Breast epithelium (tissue), 4 donors: ENCODE measurements at regions of chr1 and their contacts with region 1.

Region 1: DNA sequence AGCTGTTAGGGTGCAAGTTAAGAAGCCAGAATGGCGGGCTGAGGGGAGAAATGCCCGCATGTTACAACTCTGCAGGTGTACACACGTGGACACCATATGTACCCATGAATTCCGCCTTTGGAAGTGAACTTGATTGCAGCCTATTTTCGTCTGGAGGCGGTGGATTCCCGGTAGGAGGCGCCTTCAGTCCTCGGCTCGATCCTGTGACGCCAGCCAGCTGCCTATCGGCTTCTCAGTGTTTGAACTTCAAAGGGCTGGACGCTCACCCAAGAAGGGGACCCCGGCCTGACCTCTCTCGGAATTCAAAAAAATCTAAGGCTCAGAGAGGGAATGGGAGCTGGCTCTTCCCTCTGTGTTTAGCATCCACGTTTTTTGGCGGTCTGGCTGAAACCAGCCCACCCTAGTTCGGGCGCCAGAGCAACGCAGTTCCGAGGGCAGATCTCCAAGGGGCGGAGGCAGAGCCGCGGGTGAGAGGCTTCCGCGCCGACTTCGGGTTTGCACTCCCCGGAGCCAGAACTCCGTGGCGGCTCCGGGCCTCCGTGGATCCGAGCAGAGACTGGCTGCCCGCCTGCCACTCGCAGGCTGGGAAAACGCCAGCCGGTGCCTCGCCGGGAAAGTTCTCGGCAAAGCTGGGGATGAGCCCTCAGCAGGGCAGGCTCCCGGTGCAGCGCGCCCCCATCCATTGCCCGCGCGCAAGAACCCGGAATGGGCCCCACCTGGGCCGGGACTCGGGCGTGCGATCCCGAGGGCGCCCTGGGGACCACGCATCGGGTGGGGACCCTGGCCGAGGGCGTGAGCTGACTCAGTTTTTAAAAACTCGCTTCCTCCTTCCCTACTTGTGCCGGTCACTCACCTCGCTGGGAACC is 996 bp upstream of the TMEM51 start:
- DNase-seq: peak; percentile 84 to 86
- H3K4me3 ChIP-seq: peak overlapping the region; percentile 57 to 96 (median 85)
- H3K27ac ChIP-seq: peak overlapping the region; percentile 91 to 93
- H3K4me1 ChIP-seq: no peaks in the 10 kb centered on the region
- H3K27me3 ChIP-seq: no peaks in the 10 kb centered on the region
- CTCF ChIP-seq: peak in 2 of 3 donors; percentile 45 to 65
- POLR2A ChIP-seq: peak; percentile 22

Region 2: DNA sequence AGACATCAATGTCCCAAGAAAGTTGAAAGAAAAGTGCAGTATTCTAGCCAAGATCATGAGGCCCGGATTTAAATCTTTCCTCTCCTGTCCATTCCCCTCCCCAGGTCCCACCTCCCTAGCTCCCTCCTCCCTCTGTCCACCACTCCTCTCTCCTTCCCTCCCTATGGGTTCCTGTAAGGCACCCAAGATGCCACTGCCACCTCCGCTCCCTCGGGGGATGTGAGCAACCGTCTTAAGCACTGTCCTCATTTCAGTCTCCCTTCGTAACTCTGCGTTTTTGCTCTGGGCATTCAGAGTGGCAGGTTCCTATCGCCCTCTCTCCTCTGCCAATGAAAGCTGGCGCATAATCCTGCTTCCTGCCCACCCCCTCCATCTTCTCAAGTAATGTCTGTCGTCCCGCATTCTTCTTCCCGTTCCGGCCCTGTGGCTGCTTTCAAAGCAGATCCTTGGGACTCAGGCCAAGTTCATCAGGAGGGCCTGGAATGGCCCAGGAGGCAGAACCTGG is 252.9 kb before region 1 on chr1:
- intact Hi-C with region 1: no loop called
- DNase-seq: peak in 1 of 2 donors; percentile 72
- H3K4me3 ChIP-seq: no peak overlapping the region
- H3K27ac ChIP-seq: peak overlapping the region; percentile 52 to 60
- H3K4me1 ChIP-seq: peaks cover 0 to 6% of the 10 kb centered on the region in 2 donors
- H3K27me3 ChIP-seq: no peaks in the 10 kb centered on the region
- CTCF ChIP-seq: no peak
- POLR2A ChIP-seq: no peak

Region 3: GRCh38 chr1:15099441-15100120 is 53.0 kb before region 1 on chr1:
- intact Hi-C with region 1: loop called (anchors 2 kb)
- DNase-seq: no peak
- H3K4me3 ChIP-seq: no peak overlapping the region
- H3K27ac ChIP-seq: no peak overlapping the region
- H3K4me1 ChIP-seq: no peaks in the 10 kb centered on the region
- H3K27me3 ChIP-seq: no peaks in the 10 kb centered on the region
- CTCF ChIP-seq: no peak
- POLR2A ChIP-seq: no peak

Region 4: DNA sequence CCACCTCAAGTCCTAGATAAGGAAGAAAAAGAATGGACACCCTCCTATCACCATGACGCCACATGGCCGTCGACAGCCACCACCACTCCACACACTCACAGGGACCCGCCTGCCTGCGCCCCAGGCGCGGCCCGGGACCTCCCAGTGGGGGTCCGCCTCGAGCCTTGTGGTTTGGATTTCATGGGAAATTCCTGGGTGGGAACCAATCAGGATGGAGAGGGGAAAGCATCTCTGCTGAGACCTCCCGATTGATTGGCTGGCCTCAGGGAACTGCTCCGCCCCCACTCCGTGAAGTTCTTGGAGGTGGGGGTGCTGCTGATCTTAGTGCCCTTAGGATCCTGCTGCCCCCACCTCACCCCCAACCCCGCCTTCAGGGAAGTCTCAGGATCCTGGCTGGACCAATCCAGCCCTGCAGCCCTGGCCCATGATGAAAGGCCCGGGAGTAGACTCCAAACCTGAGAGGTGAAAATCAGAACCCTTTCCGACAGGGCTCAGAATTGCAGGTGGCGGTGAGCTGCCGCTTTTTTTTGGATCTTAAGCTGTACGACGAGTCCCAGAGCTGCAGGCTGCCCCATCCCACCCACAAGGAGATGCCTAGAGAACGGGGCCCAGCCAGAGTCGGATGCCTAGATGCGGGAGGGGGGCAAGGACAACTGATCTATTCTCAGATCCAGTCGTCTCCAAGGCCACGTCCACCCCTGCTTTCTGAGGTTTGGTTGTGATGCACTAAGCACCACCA is 28.0 kb before region 1 on chr1:
- intact Hi-C with region 1: no loop called
- DNase-seq: no peak
- H3K4me3 ChIP-seq: no peak overlapping the region
- H3K27ac ChIP-seq: no peak overlapping the region
- H3K4me1 ChIP-seq: no peaks in the 10 kb centered on the region
- H3K27me3 ChIP-seq: no peaks in the 10 kb centered on the region
- CTCF ChIP-seq: no peak
- POLR2A ChIP-seq: no peak